Motor neuron (in vitro differentiated cells): ENCODE measurements at regions of chr18 and their contacts with region 1.

Region 1: GRCh38 chr18:43571078-43571689 is 293.9 kb upstream of the SYT4 start:
- ATAC-seq: peak in 3 of 8 experiments; percentile 51 to 74 (median 59)
- H3K4me3 ChIP-seq: no peak overlapping the region
- H3K27ac ChIP-seq: no peak overlapping the region
- H3K4me1 ChIP-seq: no peaks in the 10 kb centered on the region

Region 2: DNA sequence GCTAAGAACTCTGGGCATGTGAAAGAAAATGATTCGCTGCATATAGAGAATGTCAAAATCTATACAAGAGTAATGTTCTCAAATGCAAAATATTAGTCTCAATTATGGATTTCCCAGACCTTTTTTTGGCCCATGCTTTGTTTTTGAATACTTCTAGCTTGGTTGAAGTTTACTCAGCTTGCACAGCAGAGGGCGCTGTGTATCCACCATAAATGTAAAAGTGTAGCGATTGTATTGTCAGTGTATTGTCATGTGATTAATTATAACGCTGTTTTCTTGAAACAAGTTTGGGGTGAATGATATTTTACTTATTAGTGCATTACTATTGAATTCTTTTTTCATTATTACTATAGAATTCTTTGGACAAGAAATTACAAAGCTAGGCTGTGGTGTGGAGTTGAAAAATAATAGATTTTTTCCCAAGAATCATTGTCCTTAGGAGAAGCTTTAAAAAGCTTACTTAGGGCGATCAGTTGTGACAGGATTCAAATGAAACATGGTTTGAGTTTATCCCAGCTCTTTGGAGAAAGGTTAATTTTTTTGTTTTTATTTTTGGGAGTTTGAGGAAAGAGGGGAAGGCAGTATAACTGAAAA is 1517.9 kb before region 1 on chr18:
- in situ Hi-C with region 1: loop called in 6 of 9 experiments (anchors 25 kb)
- ATAC-seq: peak; percentile 59 to 92 (median 66)
- H3K4me3 ChIP-seq: no peak overlapping the region
- H3K27ac ChIP-seq: no peak overlapping the region
- H3K4me1 ChIP-seq: peaks cover 0 to 2% of the 10 kb centered on the region in 2 donors

Region 3: GRCh38 chr18:42114310-42114943 is 1456.8 kb before region 1 on chr18:
- in situ Hi-C with region 1: loop called in 1 of 9 experiments (anchors 25 kb)
- ATAC-seq: peak; percentile 83 to 96 (median 92)
- H3K4me3 ChIP-seq: no peak overlapping the region
- H3K27ac ChIP-seq: peak overlapping the region; percentile 54 to 66
- H3K4me1 ChIP-seq: peaks cover 6 to 31% of the 10 kb centered on the region in 2 donors

Region 4: DNA sequence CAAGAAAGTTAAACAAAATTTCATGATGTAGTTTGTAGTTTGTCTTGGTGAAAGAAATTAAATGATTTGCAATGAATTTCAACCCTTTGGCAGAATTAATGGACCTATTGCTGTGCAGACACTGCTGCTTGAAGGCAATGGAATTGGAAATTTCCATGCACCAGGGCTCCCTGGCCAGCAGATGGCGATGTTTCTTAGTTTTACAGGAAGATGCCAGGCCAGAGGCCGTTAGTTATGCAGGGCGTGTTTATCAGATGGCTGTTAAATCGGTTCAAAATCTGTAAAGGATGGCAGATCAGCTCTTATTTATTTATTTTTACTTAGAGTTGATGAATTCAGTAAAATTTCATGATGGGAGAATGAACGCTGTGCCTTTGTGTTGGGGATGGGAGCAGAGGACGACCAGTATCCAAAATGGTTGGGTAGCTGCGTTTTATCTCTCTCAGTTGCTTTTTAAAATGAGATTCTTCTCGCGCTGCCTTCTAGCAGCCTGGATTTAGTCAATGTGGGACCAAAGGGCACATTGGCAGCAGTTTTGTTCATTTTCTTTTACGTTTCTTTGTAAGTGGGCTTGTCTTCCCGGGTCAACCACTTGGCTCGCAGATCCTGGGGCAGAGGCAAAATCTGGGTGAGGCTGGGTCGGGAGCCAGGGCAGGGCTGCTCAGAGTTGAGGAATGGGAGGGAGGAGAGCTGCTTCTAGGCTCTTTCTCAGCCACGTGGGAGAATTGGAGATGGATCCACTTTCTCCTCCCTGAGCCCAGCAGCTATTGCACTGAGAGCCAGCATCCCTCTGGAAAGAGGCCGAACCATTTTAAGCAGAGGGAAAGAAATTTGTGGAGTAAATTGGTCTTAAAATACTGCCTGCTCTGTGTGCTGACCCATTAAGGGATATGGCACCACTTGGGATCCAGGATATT is 1272.2 kb before region 1 on chr18:
- in situ Hi-C with region 1: loop called in 2 of 9 experiments (anchors 25 kb)
- ATAC-seq: peak; percentile 84 to 96 (median 92)
- H3K4me3 ChIP-seq: no peak overlapping the region
- H3K27ac ChIP-seq: no peak overlapping the region
- H3K4me1 ChIP-seq: peaks cover 9 to 17% of the 10 kb centered on the region in 2 donors

Region 5: GRCh38 chr18:42310956-42311355 is 1260.2 kb before region 1 on chr18:
- in situ Hi-C with region 1: loop called in 1 of 9 experiments (anchors 25 kb)
- ATAC-seq: peak in 4 of 8 experiments; percentile 44 to 98 (median 85)
- H3K4me3 ChIP-seq: no peak overlapping the region
- H3K27ac ChIP-seq: no peak overlapping the region
- H3K4me1 ChIP-seq: peaks cover 0 to 4% of the 10 kb centered on the region in 2 donors

Region 6: GRCh38 chr18:44803019-44803650 is 1232.0 kb after region 1 on chr18:
- in situ Hi-C with region 1: no loop called
- ATAC-seq: peak; percentile 55 to 99 (median 98)
- H3K4me3 ChIP-seq: no peak overlapping the region
- H3K27ac ChIP-seq: peak overlapping the region; percentile 62 to 68
- H3K4me1 ChIP-seq: peaks cover 14 to 22% of the 10 kb centered on the region in 2 donors